PC-3 (cell line): ENCODE measurements at regions of chr14 and their contacts with region 1.

Region 1: DNA sequence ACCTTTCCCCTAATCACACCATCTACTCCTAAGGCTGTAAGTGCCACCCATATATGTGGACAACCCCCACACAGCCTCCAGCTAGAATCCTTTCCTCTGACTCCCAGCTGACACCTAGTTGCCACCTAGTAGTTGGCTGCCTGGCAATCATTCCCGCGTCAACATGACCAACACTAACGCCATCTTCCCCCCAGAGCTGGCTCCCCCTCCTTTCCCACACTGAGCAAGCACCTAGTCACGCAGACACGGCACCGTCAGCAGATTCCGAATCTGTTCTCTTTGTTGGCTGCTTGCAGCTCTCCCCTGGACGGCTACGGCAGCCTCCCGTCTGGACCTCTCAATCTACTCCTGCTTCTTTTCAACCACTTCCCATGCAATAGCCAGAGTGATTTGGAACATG is 27.7 kb downstream of the UBR7 start:
- DNase-seq: peak; percentile 94
- ATAC-seq: peak; percentile 85
- H3K4me3 ChIP-seq: peak overlapping the region; percentile 54
- H3K27ac ChIP-seq: peak overlapping the region; percentile 99
- H3K4me1 ChIP-seq: peaks cover 34% of the 10 kb centered on the region
- H3K27me3 ChIP-seq: no peaks in the 10 kb centered on the region
- CTCF ChIP-seq: no peak

Region 2: GRCh38 chr14:93263416-93263815 is 28.6 kb after region 1 on chr14:
- CTCF ChIA-PET with region 1: no interaction called
- POLR2A ChIA-PET with region 1: interaction called, 4 read pairs
- intact Hi-C with region 1: loop called (anchors 1 kb)
- DNase-seq: peak; percentile 41
- ATAC-seq: no peak
- H3K4me3 ChIP-seq: no peak overlapping the region
- H3K27ac ChIP-seq: peak overlapping the region; percentile 38
- H3K4me1 ChIP-seq: peaks cover 35% of the 10 kb centered on the region
- H3K27me3 ChIP-seq: no peaks in the 10 kb centered on the region
- CTCF ChIP-seq: no peak

Region 3: GRCh38 chr14:93332853-93333630 is 98.2 kb after region 1 on chr14 and contains the start of gene BTBD7:
- CTCF ChIA-PET with region 1: no interaction called
- POLR2A ChIA-PET with region 1: no interaction called
- intact Hi-C with region 1: loop called (anchors 1 kb)
- DNase-seq: peak; percentile 97
- ATAC-seq: peak; percentile 82
- H3K4me3 ChIP-seq: peak within 1 kb of the TSS; percentile 97
- H3K27ac ChIP-seq: peak within 1 kb of the TSS; percentile 94
- H3K4me1 ChIP-seq: peaks cover 34% of the 10 kb centered on the region
- H3K27me3 ChIP-seq: no peaks in the 10 kb centered on the region
- CTCF ChIP-seq: peak; percentile 30; the same call in 1 of the 2 replicates
- total RNA-seq, gene BTBD7: 23.2 and 29.8 TPM in 2 replicates

Region 4: GRCh38 chr14:93543766-93544165 is 309.0 kb after region 1 on chr14:
- CTCF ChIA-PET with region 1: no interaction called
- POLR2A ChIA-PET with region 1: no interaction called
- intact Hi-C with region 1: loop called (anchors 2 kb)
- DNase-seq: peak; percentile 53
- ATAC-seq: peak; percentile 60; the same call in 1 of the 2 replicates
- H3K4me3 ChIP-seq: no peak overlapping the region
- H3K27ac ChIP-seq: no peak overlapping the region
- H3K4me1 ChIP-seq: no peaks in the 10 kb centered on the region
- H3K27me3 ChIP-seq: peaks cover 49% of the 10 kb centered on the region
- CTCF ChIP-seq: peak; percentile 63

Region 5: DNA sequence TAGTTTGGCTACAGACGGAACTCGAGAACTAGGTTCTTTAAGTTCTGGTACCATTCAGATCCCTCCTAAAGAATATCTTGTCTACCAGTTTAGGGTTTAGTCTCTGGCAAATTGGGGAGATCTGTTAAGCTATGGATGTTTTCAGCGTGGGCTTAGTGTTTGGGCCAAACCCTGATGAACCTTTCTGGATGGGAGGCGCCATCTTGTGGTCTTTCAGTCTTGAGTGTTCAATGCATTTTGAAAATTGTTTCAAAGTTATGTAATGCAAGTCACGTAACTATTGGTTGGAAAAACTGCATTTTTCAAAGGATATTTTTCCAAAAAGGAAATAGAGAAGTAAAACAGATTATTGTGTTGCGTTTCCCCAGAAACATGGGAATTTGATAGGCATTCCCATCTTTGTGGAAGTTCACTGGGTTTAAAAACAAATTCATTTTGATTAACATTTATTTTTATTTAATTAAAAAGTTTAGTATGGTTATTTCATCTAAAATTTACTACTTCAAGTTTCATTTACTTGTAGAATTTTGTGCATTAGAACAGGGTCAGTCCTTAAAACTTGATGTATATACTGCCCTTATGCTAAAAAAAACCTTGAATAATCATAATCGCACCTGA is 384.5 kb after region 1 on chr14:
- CTCF ChIA-PET with region 1: no interaction called
- POLR2A ChIA-PET with region 1: no interaction called
- intact Hi-C with region 1: loop called (anchors 1 kb)
- DNase-seq: peak; percentile 68
- ATAC-seq: peak; percentile 65; the same call in 1 of the 2 replicates
- H3K4me3 ChIP-seq: no peak overlapping the region
- H3K27ac ChIP-seq: no peak overlapping the region
- H3K4me1 ChIP-seq: no peaks in the 10 kb centered on the region
- H3K27me3 ChIP-seq: peaks cover 57% of the 10 kb centered on the region
- CTCF ChIP-seq: peak; percentile 82